ENCODE measurements at regions of chr17 and their contacts with region 1.

Region 1: DNA sequence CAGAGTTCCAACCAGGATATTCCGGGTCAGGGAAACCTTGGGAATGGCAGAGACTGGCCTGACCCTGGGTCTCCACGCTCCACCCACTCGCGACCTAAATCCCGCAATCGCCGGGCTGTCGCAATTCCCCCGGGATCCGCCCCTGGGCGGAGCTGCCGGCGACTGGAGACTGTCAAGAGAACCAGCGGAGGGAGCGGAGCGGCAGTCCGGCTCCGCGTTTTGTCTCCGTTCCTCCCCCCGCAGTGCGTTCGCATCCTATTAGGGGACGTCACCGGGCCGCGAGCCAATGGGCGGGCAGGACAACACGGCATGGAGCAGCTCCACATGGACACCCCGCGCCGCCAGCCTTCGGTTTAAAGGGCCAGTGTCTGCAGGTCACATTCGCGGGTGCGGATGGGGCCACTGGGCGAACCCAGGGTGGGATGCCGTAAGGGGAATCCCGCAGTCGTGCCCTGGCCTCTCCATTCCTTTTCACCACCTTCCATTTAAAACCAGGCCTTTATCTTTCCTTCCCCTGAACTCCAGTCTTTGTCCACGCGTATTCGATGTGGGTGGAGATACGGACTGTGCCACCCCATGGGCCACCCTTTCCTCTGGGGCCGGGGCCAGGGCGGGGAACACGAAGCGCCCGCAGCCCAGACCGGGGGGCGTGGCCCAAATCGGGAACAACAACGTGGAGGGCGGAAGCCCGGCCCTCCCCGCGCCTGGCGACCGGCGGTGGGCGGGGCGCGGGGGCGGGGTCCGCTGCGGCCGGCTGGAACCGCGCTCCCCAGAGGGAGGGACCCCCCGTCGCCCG is 764 bp upstream of the MNT start:
- DNase-seq: peak; percentile 94 to 100 (median 99)
- ATAC-seq: peak; percentile 73
- H3K4me3 ChIP-seq: peak overlapping the region; percentile 94
- H3K4me3 Mint-ChIP-seq: peak overlapping the region; percentile 94 to 100 (median 98)
- H3K27ac ChIP-seq: peak overlapping the region; percentile 97
- H3K27ac Mint-ChIP-seq: peak overlapping the region; percentile 97 to 100 (median 99)
- H3K4me1 ChIP-seq: peaks cover 6 to 30% of the 10 kb centered on the region in 2 donors
- H3K4me1 Mint-ChIP-seq: peaks cover 27 to 62% (median 35%) of the 10 kb centered on the region in 7 donors
- H3K27me3 ChIP-seq: no peaks in the 10 kb centered on the region
- H3K27me3 Mint-ChIP-seq: no peaks in the 10 kb centered on the region

Region 2: GRCh38 chr17:1870592-1870991 is 531.0 kb before region 1 on chr17:
- CTCF ChIA-PET with region 1: no interaction called
- POLR2A ChIA-PET with region 1: interaction called, 3 read pairs
- intact Hi-C with region 1: loop called in 1 of 2 experiments (anchors 5 kb)
- DNase-seq: peak in 7 of 9 donors; percentile 60 to 86 (median 79)
- ATAC-seq: peak; percentile 81
- H3K4me3 ChIP-seq: no peak overlapping the region
- H3K4me3 Mint-ChIP-seq: peak overlapping the region; percentile 16 to 93 (median 82)
- H3K27ac ChIP-seq: peak overlapping the region; percentile 88
- H3K27ac Mint-ChIP-seq: peak overlapping the region; percentile 90 to 99 (median 96)
- H3K4me1 ChIP-seq: peaks cover 34 to 40% of the 10 kb centered on the region in 2 donors
- H3K4me1 Mint-ChIP-seq: peaks cover 43 to 79% (median 71%) of the 10 kb centered on the region in 7 donors
- H3K27me3 ChIP-seq: no peaks in the 10 kb centered on the region
- H3K27me3 Mint-ChIP-seq: no peaks in the 10 kb centered on the region

Region 3: DNA sequence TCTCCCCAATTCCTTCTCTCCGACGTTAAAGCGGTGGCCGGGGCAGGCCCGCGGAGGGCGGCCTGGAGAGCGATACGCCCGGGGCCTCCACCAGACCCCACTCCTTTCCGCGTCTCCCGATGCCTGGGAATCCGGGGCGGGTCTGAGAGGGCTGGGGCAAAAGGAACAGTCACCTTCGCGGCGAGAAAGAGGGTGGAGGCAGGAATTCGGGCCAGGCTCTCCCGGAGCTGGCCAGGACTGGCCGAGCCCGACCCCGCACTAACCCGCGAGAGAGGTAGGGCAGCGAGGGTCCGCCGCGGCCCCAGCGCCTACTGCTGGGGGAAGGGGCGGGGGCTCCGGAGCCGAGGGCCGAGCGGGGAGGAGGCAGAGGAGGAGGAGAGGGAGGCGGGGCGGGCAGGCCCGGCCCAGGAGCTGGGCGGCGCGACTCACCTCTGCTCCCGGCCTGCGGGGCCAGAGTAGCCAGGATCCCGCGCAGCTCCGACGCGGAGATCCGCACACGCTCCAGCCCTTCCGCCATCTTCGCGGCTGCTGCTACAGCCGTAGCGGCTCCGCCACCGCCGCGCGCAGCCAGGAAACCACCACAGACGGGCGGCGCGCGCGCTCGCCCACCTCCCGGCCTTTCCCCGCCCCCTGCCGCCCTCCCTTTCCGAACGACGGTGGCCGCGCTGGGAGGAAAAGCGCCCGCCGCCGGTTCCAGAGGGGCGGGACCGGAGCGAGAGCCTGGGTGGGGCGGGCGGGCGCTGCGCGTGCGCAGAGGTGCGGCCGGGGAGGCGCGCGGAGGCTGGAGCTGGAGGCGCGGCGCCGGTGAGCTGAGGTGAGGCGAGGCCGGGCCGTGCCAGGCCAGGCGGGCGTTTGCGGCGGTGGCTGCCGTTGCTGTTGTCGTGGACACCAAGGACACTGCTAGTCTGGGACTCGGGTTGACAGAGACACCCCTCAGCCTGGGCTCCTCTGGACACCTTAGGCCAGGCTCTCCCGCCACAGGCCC is 98.1 kb before region 1 on chr17 and contains the starts of genes SMG6 and SRR:
- CTCF ChIA-PET with region 1: no interaction called
- POLR2A ChIA-PET with region 1: no interaction called
- intact Hi-C with region 1: loop called (anchors 1 kb)
- DNase-seq: peak; percentile 87 to 95 (median 93)
- ATAC-seq: peak; percentile 97
- H3K4me3 ChIP-seq: peak within 1 kb of the TSS; percentile 87
- H3K4me3 Mint-ChIP-seq: peak within 1 kb of the TSS; percentile 90 to 98 (median 92)
- H3K27ac ChIP-seq: peak within 1 kb of the TSS; percentile 98
- H3K27ac Mint-ChIP-seq: peak within 1 kb of the TSS; percentile 76 to 95 (median 84)
- H3K4me1 ChIP-seq: peaks cover 9 to 13% of the 10 kb centered on the region in 2 donors
- H3K4me1 Mint-ChIP-seq: peaks cover 25 to 61% (median 47%) of the 10 kb centered on the region in 7 donors
- H3K27me3 ChIP-seq: no peaks in the 10 kb centered on the region
- H3K27me3 Mint-ChIP-seq: no peaks in the 10 kb centered on the region
- total RNA-seq, gene SMG6: 45.6 to 65.3 (median 55.8) TPM
- total RNA-seq, gene SRR: 3.1 to 16.0 (median 8.3) TPM

Region 4: DNA sequence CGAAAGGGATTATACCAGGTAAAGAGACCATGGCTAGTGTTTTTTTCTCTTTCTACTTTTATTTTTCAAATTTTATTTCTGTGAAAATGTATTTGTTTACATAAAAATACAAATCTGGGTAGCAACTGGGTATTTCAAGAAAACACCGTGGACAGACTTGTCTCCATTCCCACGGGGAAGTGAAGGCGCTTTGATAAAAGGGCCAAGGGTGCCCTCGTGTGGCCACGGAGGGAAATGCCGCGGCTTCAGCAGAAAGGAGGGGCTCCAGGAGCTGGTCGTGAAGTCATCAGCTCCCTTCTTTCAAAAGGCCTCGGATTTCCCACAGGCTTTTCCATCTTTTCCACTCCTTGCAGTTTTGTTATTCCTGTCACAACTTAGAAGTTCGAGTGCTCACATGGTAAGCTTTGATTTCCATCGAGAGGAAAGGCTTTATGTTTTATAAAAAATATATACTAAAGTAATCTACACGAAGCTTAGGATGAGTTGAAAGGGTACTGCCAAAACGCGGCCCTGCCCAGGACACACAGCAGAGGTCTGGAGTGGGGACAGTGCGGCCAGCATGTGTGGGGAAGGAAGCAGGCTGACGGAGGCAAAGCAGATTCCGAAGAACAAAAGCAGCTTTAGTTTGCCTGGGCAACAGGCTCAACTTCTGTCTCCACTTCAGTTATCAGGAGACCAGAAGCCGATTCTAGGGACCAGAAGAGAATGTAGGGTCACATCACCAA is 14.5 kb after region 1 on chr17:
- CTCF ChIA-PET with region 1: interaction called, 11 read pairs
- POLR2A ChIA-PET with region 1: interaction called, 7 read pairs
- intact Hi-C with region 1: loop called (anchors 1 kb)
- DNase-seq: peak; percentile 70 to 87 (median 78)
- ATAC-seq: peak; percentile 90
- H3K4me3 ChIP-seq: no peak overlapping the region
- H3K4me3 Mint-ChIP-seq: no peak overlapping the region
- H3K27ac ChIP-seq: no peak overlapping the region
- H3K27ac Mint-ChIP-seq: peak overlapping the region in 7 of 9 donors; percentile 31 to 80 (median 58)
- H3K4me1 ChIP-seq: no peaks in the 10 kb centered on the region
- H3K4me1 Mint-ChIP-seq: peaks cover 0 to 4% (median 0%) of the 10 kb centered on the region in 7 donors
- H3K27me3 ChIP-seq: no peaks in the 10 kb centered on the region
- H3K27me3 Mint-ChIP-seq: no peaks in the 10 kb centered on the region

Region 5: GRCh38 chr17:2711601-2712299 is 310.1 kb after region 1 on chr17 and contains the start of gene CLUH:
- CTCF ChIA-PET with region 1: no interaction called
- POLR2A ChIA-PET with region 1: no interaction called
- intact Hi-C with region 1: loop called (anchors 1 to 5 kb)
- DNase-seq: peak; percentile 92 to 99 (median 96)
- ATAC-seq: peak; percentile 98
- H3K4me3 ChIP-seq: peak within 1 kb of the TSS; percentile 97
- H3K4me3 Mint-ChIP-seq: peak within 1 kb of the TSS; percentile 78 to 91 (median 87)
- H3K27ac ChIP-seq: peak within 1 kb of the TSS; percentile 70
- H3K27ac Mint-ChIP-seq: peak within 1 kb of the TSS; percentile 41 to 89 (median 75)
- H3K4me1 ChIP-seq: peaks cover 22 to 36% of the 10 kb centered on the region in 2 donors
- H3K4me1 Mint-ChIP-seq: peaks cover 33 to 44% (median 36%) of the 10 kb centered on the region in 7 donors
- H3K27me3 ChIP-seq: no peaks in the 10 kb centered on the region
- H3K27me3 Mint-ChIP-seq: no peaks in the 10 kb centered on the region
- total RNA-seq, gene CLUH: 34.6 to 71.1 (median 48.8) TPM